Heart left ventricle (tissue), 16 donors: ENCODE measurements at regions of chr9 and their contacts with region 1.

Region 1: GRCh38 chr9:33404788-33405362 is 2.5 kb upstream of the AQP7 start:
- DNase-seq: no peak
- ATAC-seq: peak in 3 of 4 donors; percentile 21 to 38 (median 35)
- H3K4me3 ChIP-seq: no peak overlapping the region
- H3K27ac ChIP-seq: peak overlapping the region; percentile 10 to 98 (median 92)
- H3K4me1 ChIP-seq: peaks cover 0 to 49% (median 27%) of the 10 kb centered on the region in 12 donors
- H3K27me3 ChIP-seq: no peaks in the 10 kb centered on the region
- CTCF ChIP-seq: no peak
- POLR2A ChIP-seq: no peak

Region 2: GRCh38 chr9:32843295-32843694 is 561.6 kb before region 1 on chr9:
- intact Hi-C with region 1: no loop called
- DNase-seq: no peak
- ATAC-seq: no peak
- H3K4me3 ChIP-seq: no peak overlapping the region
- H3K27ac ChIP-seq: no peak overlapping the region
- H3K4me1 ChIP-seq: no peaks in the 10 kb centered on the region
- H3K27me3 ChIP-seq: peaks cover 0 to 9% (median 0%) of the 10 kb centered on the region in 9 donors
- CTCF ChIP-seq: no peak
- POLR2A ChIP-seq: no peak

Region 3: GRCh38 chr9:33290247-33291030 is 114.4 kb before region 1 on chr9 and contains the start of gene NFX1:
- intact Hi-C with region 1: no loop called
- DNase-seq: peak; percentile 98 to 99 (median 98)
- ATAC-seq: peak; percentile 91 to 96 (median 94)
- H3K4me3 ChIP-seq: peak within 1 kb of the TSS; percentile 56 to 94 (median 78)
- H3K27ac ChIP-seq: peak within 1 kb of the TSS; percentile 94 to 100 (median 98)
- H3K4me1 ChIP-seq: peaks cover 9 to 58% (median 34%) of the 10 kb centered on the region in 12 donors
- H3K27me3 ChIP-seq: no peaks in the 10 kb centered on the region
- CTCF ChIP-seq: no peak
- POLR2A ChIP-seq: peak; percentile 36 to 90
- total RNA-seq, gene NFX1: 25.4 to 42.0 (median 36.1) TPM

Region 4: DNA sequence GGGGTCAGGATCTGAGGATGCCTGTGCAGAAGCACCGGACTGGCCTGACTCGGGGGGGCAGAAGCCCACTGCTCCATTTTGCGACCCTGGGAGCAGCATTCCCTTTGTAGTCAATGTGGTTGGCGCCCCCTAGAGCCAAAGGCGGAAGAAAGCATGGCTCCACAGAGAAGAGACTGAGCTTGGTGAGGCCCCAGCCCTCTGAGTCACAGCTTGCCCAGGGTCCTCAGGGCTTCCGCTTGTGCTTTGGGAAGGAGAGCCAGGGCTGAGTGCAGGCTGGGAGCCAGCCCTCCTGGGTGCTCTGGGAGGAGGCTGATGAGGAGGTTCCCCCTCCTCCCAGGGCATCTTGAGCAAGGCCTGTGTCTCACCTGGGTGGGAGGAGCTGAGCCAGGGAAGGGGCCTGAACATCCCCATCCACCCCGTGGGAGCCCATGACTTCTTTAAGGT is 48.0 kb after region 1 on chr9:
- intact Hi-C with region 1: loop called in 2 of 10 experiments (anchors 5 to 10 kb)
- DNase-seq: peak in 4 of 5 donors; percentile 37 to 72 (median 54)
- ATAC-seq: peak in 3 of 4 donors; percentile 62 to 69 (median 63)
- H3K4me3 ChIP-seq: no peak overlapping the region
- H3K27ac ChIP-seq: no peak overlapping the region
- H3K4me1 ChIP-seq: peaks cover 0 to 10% (median under 1%) of the 10 kb centered on the region in 12 donors
- H3K27me3 ChIP-seq: no peaks in the 10 kb centered on the region
- CTCF ChIP-seq: peak; percentile 38 to 65 (median 58)
- POLR2A ChIP-seq: no peak

Region 5: DNA sequence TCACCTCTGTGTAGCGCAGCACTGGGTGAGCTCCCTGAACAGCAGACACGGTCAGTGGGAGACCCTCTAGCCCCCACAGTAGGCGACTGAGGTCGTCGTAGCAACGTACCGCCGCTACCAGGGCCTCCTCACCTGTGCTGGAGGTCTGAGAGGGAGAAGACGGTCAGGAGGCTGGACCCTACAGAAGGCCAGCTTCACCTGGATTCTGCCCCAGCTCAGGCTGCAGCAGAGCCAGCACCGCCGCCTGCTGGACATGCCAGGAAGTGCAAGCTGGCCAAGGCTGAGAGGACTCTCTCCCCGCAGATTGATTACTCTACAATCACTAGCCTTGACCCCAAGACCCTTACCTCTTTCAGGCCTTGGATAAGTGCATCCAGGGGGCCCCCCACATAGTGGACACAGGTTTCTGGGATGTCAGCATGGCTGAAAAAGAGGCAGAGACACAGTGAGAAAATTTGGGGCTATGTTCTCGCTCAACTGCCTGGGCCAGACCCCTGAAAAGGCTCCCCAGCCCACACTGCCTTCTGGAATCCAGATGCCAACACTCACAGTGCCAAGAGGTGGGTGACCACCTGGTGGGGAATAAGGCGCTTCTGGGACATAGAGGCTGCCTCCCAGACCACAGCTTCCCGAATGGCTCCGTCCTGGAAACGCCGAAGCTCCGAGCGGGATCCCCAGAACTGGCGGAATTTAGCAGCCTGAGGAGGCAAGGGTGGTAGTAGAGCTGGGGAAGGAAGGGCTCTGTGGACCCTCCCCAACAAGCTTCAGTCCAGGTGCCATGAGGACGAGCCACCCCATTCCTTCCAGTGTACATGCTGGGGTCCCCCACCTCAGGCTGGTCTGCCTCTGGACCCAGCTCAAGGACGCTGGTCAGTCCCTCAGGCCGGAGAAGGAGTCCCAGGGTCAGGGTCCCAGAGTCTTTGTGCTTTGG is 62.0 kb after region 1 on chr9:
- intact Hi-C with region 1: loop called in 3 of 10 experiments (anchors 5 to 10 kb)
- DNase-seq: peak; percentile 50 to 84 (median 57)
- ATAC-seq: peak; percentile 28 to 68 (median 46)
- H3K4me3 ChIP-seq: no peak overlapping the region
- H3K27ac ChIP-seq: no peak overlapping the region
- H3K4me1 ChIP-seq: peaks cover 0 to 6% (median 0%) of the 10 kb centered on the region in 12 donors
- H3K27me3 ChIP-seq: no peaks in the 10 kb centered on the region
- CTCF ChIP-seq: peak; percentile 84 to 95 (median 89)
- POLR2A ChIP-seq: no peak

Region 6: DNA sequence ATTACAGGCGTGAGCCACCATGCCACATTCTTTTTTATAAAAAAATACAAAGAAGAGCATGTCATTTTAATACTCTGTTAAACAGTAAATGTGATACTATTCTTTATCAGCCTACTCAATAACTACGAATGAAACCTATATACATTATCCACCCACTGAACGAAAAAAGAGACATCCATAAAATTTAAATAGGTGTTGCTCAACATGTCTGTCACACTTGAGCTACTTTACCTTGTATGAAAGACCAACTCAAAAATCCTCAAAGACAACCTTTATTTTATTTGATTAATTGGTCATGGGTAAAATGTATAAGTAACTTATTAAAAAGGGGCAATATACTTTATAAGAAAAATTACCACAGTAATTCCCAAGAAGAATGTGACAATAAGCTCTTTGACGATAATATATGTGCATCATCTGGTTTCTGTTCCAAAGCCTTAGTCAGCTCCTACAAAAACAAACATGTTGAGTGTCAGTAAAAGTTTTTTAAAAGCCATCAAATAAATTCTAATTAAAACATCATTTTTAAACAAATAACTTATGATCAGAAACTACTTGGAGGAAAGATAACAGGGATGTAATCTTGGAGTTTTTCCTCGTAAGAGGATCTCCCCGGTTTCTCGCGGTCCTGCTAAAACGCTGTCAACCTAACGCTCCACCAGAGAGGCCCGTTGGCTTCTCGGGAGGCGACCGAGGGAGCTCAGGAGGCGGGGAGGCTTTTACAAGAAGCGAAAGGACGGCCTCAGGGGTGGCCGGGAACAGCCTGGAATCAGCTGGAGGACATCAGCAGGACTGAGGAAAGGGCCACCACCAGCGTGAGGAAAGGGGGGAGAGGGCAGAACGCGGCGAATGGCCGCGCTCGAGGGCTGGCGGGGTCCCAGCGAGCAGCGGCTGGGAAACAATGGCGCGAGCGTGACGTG is 105.6 kb after region 1 on chr9:
- intact Hi-C with region 1: loop called in 1 of 10 experiments (anchors 10 kb)
- DNase-seq: peak; percentile 69 to 85 (median 77)
- ATAC-seq: peak; percentile 85 to 97 (median 92)
- H3K4me3 ChIP-seq: peak overlapping the region; percentile 12 to 74 (median 61)
- H3K27ac ChIP-seq: peak overlapping the region in 11 of 12 donors; percentile 69 to 92 (median 81)
- H3K4me1 ChIP-seq: peaks cover 0 to 13% (median 7%) of the 10 kb centered on the region in 12 donors
- H3K27me3 ChIP-seq: no peaks in the 10 kb centered on the region
- CTCF ChIP-seq: no peak
- POLR2A ChIP-seq: peak in 1 of 2 donors; percentile 32